ENCODE measurements at regions of chr6 and their contacts with region 1.

Region 1: DNA sequence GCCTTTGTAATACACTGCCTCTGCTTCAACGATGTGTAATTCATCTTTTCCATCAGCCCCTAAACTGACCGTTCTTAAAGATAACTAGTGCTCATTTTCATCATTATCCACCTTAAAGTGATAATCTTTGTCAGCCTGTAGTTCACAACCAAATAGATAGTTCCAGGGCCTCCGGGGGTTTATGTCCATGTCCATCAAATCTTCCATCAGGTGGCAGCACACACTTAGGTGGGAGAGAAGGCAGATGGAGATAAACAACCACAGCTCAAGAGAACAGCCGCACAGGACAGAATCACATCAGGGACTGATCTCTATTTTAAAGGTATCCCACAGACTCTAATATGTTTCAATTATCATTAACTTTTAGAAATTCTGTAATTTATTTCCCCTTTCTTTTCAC is 90.9 kb downstream of the LMBRD1 start:
- DNase-seq: no peak
- ATAC-seq: no peak

Region 2: DNA sequence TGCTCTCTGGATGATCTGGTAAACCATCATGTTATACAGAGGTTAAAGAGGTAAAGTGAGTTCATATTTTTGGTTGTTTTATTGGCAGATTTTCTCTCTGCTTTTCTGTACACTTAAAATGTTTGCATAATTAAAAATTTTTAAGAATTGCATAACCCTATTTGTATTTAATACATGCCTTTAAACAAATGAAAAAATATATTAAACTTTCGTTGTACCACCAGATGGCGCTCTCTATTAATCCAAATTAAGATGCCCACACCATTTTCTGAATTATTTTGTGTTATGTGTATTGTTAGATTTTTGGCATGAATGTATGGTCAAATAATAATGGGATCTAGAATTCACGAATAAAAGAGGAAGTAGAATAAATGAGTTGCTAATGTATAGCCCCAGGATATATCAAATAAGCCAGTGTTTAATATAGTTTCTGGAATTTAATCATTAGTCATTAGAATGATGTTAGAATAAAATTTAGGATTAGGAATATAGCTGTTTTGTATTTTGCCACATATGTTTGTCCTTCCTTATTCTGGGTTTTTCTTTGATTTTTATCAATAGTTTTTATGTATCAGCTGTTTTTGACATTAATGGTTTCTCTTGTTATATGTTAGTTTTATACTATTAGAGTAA is 1000.7 kb after region 1 on chr6:
- intact Hi-C with region 1: loop called (anchors 10 kb)
- DNase-seq: no peak
- ATAC-seq: no peak